Naive thymus-derived CD8-positive, alpha-beta T cell (primary cell): ENCODE measurements at regions of chr6 and their contacts with region 1.

Region 1: DNA sequence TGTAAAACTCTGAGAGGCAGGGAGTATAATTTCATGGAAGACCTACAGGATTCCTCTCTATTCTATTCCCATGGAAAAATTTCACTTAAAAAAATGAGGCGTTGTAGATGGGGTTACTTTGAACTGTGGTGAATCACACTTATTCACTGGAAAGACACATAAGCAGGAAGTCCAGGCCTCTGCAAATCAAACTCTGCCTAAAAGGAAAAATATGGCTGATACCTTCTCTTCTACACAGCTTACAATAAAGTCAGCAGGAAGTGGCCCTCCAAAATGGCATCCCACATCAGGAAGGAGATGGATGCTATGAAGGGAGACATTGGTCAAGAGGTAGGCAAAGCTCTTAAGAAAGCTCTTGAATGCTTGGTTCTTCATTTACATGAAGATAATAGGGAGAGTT is 115.9 kb downstream of the FYN start:
- DNase-seq: peak in 2 of 10 donors; percentile 30 to 51
- ATAC-seq: peak; percentile 5 to 7
- H3K4me3 Mint-ChIP-seq: peak overlapping the region; percentile 60 to 91 (median 81)
- H3K27ac Mint-ChIP-seq: peak overlapping the region; percentile 94 to 100 (median 98)
- H3K4me1 Mint-ChIP-seq: peaks cover 63 to 95% (median 92%) of the 10 kb centered on the region in 4 donors
- H3K27me3 Mint-ChIP-seq: no peaks in the 10 kb centered on the region

Region 2: DNA sequence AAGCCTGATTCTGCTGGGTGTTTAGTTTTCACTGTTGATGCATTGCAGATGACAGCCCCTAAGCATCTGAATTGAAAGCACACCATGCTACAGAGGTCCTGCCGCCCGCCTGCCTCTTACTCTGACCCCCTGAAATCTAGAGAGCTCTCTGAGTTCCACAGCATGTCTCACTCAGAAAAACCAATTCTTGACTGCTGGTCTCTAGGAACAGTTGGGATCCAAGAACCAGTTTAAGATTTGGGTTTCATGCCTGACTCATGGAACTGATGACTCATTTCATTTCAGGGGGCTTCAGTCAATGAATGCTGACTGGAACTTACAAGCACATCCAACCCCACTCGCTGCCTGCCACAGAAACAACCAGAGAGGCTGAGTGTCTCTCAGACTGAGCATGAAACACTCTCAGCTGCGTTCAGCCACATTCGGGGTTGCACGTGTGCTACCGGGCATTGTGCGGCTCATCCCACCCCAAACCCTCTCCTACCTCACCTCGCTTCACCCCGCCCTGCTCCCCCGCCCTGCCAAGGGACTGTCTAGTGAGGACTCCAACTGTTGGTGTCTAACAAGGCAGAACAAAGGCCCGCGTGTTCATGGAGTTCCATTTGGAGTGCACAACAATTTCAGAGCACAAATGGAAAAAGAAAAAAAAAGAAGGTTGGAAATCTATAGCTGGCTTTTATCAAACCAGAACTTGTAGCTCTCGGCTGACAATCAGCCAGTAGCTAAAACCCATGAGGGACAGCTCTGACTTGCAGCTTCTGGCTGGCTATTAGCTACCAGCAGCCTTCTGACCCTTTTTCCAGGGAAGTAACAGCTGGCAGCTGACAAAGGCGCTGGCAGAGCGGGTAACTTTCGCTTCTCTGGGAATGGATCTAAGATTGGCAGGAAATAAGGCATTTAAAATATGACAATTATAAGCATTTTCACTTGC is 131.6 kb before region 1 on chr6:
- POLR2A ChIA-PET with region 1: no interaction called
- DNase-seq: no peak
- ATAC-seq: no peak
- H3K4me3 Mint-ChIP-seq: no peak overlapping the region
- H3K27ac Mint-ChIP-seq: no peak overlapping the region
- H3K4me1 Mint-ChIP-seq: no peaks in the 10 kb centered on the region
- H3K27me3 Mint-ChIP-seq: peaks cover 0 to 3% (median 2%) of the 10 kb centered on the region in 5 donors

Region 3: GRCh38 chr6:111743862-111744692 is 13.3 kb before region 1 on chr6:
- POLR2A ChIA-PET with region 1: interaction called, 12 read pairs
- DNase-seq: no peak
- ATAC-seq: no peak
- H3K4me3 Mint-ChIP-seq: no peak overlapping the region
- H3K27ac Mint-ChIP-seq: peak overlapping the region in 7 of 10 donors; percentile 34 to 97 (median 61)
- H3K4me1 Mint-ChIP-seq: peaks cover 50 to 99% (median 90%) of the 10 kb centered on the region in 4 donors
- H3K27me3 Mint-ChIP-seq: no peaks in the 10 kb centered on the region